ENCODE measurements at regions of chr14 and their contacts with region 1.

Region 1: GRCh38 chr14:59189786-59190771 is 1.6 kb downstream of the DAAM1 start:
- DNase-seq: peak; percentile 34 to 76 (median 49)
- ATAC-seq: peak; percentile 4
- H3K4me3 ChIP-seq: peak overlapping the region; percentile 93
- H3K4me3 Mint-ChIP-seq: peak overlapping the region; percentile 92 to 100 (median 96)
- H3K27ac ChIP-seq: peak overlapping the region; percentile 91
- H3K27ac Mint-ChIP-seq: peak overlapping the region; percentile 85 to 98 (median 93)
- H3K4me1 ChIP-seq: peaks cover 0 to 10% of the 10 kb centered on the region in 2 donors
- H3K4me1 Mint-ChIP-seq: peaks cover 15 to 30% (median 21%) of the 10 kb centered on the region in 7 donors
- H3K27me3 ChIP-seq: no peaks in the 10 kb centered on the region
- H3K27me3 Mint-ChIP-seq: peaks cover 0 to 22% (median 4%) of the 10 kb centered on the region in 5 donors

Region 2: DNA sequence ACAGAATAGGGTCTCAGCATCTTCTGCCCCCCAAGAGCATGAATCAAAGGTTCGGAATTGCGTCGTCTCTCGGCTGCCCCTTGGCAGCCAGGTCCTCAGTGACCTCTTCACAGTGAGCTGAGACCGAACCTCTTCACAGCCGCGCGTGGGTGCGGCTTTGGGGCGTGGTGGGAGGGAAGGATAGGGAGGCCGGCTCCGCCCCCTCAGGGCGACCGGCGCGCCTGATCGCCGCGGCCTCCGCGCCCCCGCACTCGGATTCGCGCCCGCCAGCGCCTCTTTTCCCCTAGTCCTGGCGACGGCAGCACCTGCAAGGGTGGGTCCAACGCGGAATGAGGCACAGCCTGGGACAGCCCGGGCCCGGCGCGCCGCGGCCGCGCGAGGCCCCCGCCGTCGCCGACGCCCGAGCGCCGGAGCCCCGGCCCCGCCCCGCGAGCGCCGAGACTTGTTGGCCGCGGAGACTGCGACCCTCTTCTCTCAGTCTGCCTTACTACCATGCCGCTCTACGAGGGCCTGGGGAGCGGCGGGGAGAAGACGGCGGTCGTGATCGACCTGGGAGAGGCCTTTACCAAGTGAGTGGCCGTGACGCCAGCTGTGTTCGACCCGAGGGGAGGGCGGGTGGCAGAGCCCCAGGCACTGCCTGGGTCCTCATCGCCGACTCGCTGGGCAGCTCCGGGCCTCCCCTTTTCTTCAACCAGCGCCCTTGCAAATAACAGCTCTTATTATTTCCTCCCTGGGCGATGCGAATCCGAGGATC is 990.2 kb before region 1 on chr14 and contains the start of gene ACTR10:
- CTCF ChIA-PET with region 1: no interaction called
- POLR2A ChIA-PET with region 1: no interaction called
- intact Hi-C with region 1: loop called (anchors 1 kb)
- DNase-seq: peak; percentile 80 to 93 (median 88)
- ATAC-seq: peak; percentile 94
- H3K4me3 ChIP-seq: peak within 1 kb of the TSS; percentile 75
- H3K4me3 Mint-ChIP-seq: peak within 1 kb of the TSS; percentile 90 to 99 (median 97)
- H3K27ac ChIP-seq: peak within 1 kb of the TSS; percentile 87
- H3K27ac Mint-ChIP-seq: peak within 1 kb of the TSS; percentile 93 to 99 (median 98)
- H3K4me1 ChIP-seq: peaks cover 15 to 27% of the 10 kb centered on the region in 2 donors
- H3K4me1 Mint-ChIP-seq: peaks cover 21 to 60% (median 48%) of the 10 kb centered on the region in 7 donors
- H3K27me3 ChIP-seq: no peaks in the 10 kb centered on the region
- H3K27me3 Mint-ChIP-seq: peaks cover 0 to 7% (median 0%) of the 10 kb centered on the region in 5 donors
- total RNA-seq, gene ACTR10: 40.0 to 54.6 (median 50.4) TPM

Region 3: GRCh38 chr14:58331111-58331510 is 859.0 kb before region 1 on chr14:
- CTCF ChIA-PET with region 1: no interaction called
- POLR2A ChIA-PET with region 1: no interaction called
- intact Hi-C with region 1: loop called in 1 of 2 experiments (anchors 2 kb)
- DNase-seq: peak; percentile 61 to 98 (median 95)
- ATAC-seq: peak; percentile 97
- H3K4me3 ChIP-seq: peak overlapping the region; percentile 17
- H3K4me3 Mint-ChIP-seq: peak overlapping the region; percentile 38 to 85 (median 76)
- H3K27ac ChIP-seq: peak overlapping the region; percentile 72
- H3K27ac Mint-ChIP-seq: peak overlapping the region; percentile 84 to 97 (median 94)
- H3K4me1 ChIP-seq: peaks cover 5 to 9% of the 10 kb centered on the region in 2 donors
- H3K4me1 Mint-ChIP-seq: peaks cover 17 to 42% (median 32%) of the 10 kb centered on the region in 7 donors
- H3K27me3 ChIP-seq: no peaks in the 10 kb centered on the region
- H3K27me3 Mint-ChIP-seq: no peaks in the 10 kb centered on the region

Region 4: DNA sequence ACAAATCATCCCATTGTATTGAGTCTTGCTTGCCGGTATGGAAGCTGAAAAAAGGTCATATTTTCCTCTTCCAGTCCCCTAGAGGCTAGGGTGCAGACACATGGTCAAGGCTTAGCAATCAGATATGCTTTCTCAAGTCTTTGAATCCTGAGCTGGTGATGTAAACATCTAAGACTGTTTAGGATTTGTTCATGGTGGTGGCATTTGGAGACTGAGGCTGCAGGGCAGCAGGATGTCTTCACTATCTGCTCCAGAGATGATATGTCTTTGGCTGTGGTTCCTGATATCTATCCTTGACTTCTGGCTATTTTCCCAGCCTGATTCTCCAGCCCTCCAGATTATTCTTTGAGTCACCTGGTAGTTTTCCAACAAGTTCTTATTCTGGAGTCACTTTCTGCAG is 602.8 kb before region 1 on chr14:
- CTCF ChIA-PET with region 1: no interaction called
- POLR2A ChIA-PET with region 1: no interaction called
- intact Hi-C with region 1: no loop called
- DNase-seq: no peak
- ATAC-seq: no peak
- H3K4me3 ChIP-seq: no peak overlapping the region
- H3K4me3 Mint-ChIP-seq: no peak overlapping the region
- H3K27ac ChIP-seq: no peak overlapping the region
- H3K27ac Mint-ChIP-seq: no peak overlapping the region
- H3K4me1 ChIP-seq: no peaks in the 10 kb centered on the region
- H3K4me1 Mint-ChIP-seq: peaks cover 0 to 11% (median 6%) of the 10 kb centered on the region in 7 donors
- H3K27me3 ChIP-seq: no peaks in the 10 kb centered on the region
- H3K27me3 Mint-ChIP-seq: peaks cover 0 to 12% (median 7%) of the 10 kb centered on the region in 5 donors

Region 5: DNA sequence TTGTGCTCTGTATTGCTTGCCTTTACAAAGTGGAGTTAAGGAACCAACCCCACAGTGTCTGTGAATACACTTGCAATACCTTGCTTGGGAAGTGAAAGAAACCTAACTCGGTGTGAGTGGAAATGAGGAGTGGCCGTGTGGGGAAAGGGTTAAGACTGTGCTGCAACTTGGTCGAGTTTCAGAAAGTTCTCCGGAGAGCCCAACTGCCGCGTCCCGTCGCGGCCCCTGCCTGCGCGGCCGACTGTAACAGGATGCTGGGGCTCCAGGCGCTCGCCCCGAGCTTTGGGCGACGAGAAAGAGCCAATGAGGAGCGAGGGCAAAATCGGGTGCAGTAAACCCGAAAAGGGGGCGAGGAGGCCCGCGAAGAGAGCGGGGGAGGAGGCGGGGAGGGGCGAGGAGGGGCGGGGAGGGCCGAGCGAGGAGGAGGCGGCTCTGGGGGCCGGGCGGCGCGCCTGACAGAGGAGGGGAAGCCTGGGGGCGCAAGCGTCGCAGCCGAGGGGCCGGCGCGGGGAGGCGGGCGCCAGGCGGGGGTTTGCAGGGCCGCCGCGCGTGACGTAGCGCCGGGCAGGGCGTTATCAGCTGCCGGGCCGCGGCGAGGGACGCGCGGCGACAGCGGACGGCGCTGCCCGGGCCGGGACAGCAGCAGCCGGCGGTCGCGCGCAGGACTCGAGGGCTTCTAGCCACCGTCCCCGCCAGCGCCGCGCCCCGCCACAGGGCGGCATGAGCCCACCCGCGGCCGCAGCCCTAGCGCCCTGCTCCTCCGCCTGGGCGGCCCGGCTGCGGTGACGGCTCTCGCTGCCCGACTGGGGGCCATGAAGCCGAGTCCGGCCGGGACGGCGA is 552.5 kb before region 1 on chr14 and contains the start of gene DACT1:
- CTCF ChIA-PET with region 1: no interaction called
- POLR2A ChIA-PET with region 1: no interaction called
- intact Hi-C with region 1: loop called (anchors 1 to 10 kb)
- DNase-seq: peak; percentile 45 to 74 (median 64)
- ATAC-seq: peak; percentile 80
- H3K4me3 ChIP-seq: peak within 1 kb of the TSS; percentile 80
- H3K4me3 Mint-ChIP-seq: peak within 1 kb of the TSS; percentile 89 to 99 (median 98)
- H3K27ac ChIP-seq: peak within 1 kb of the TSS; percentile 61
- H3K27ac Mint-ChIP-seq: peak within 1 kb of the TSS; percentile 84 to 95 (median 91)
- H3K4me1 ChIP-seq: peaks cover 0 to 22% of the 10 kb centered on the region in 2 donors
- H3K4me1 Mint-ChIP-seq: peaks cover 20 to 61% (median 45%) of the 10 kb centered on the region in 7 donors
- H3K27me3 ChIP-seq: no peaks in the 10 kb centered on the region
- H3K27me3 Mint-ChIP-seq: peaks cover 0 to 44% (median 6%) of the 10 kb centered on the region in 5 donors
- total RNA-seq, gene DACT1: 8.2 to 32.3 (median 15.0) TPM

Region 6: DNA sequence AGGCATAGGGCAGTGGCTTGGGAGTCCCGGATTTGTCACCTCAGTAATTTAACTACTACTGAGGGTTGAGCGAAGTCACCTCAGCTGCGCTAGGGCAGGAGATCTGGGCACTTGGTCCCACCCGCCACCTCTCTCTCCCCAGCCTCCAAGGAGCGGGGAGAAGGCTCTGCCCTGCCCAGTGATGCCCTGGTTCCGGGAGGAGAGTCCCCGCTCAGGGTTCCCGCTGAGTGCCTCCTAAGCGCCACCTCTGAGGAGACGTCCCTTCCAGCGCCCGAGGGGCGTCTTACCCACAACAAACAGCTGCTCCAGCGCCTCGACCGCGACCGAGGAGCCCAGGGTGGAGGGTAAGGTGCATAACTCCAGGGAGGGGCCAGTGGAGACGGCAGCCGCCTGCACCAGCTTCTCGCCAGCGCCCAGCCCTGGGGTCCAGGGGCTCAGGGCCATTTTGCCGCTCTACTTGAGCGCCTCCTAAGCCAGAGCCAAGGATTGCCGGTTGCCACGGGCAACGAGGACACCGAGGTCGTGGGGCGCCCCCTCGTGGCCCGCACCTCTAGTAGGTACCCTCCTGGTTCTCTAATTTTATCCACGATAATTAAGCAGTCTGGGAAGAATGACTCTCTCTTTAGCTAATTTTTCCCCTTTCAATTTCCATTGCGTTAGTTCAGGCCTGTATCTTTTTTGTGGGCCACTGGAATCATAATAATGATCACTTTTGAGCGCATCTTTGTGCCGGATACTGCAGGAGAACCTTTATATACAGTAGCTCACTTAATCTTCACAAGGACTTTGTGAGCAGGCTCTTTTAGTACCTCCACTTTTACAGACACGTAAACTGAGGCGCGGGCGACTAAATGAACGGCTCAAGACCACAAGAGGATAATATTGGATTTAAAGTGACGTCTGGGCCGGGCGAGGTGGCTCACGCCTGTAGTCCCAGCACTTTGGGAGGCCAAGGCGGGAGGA is 386.5 kb after region 1 on chr14 and contains the start of gene CCDC175:
- CTCF ChIA-PET with region 1: no interaction called
- POLR2A ChIA-PET with region 1: no interaction called
- intact Hi-C with region 1: loop called in 1 of 2 experiments (anchors 1 kb)
- DNase-seq: peak; percentile 66 to 84 (median 78)
- ATAC-seq: peak; percentile 98
- H3K4me3 ChIP-seq: peak within 1 kb of the TSS; percentile 63
- H3K4me3 Mint-ChIP-seq: peak within 1 kb of the TSS; percentile 66 to 86 (median 78)
- H3K27ac ChIP-seq: no peak within 1 kb of the TSS
- H3K27ac Mint-ChIP-seq: peak within 1 kb of the TSS in 3 of 9 donors; percentile 8 to 26 (median 14)
- H3K4me1 ChIP-seq: peaks cover 3 to 4% of the 10 kb centered on the region in 2 donors
- H3K4me1 Mint-ChIP-seq: peaks cover 4 to 9% (median 7%) of the 10 kb centered on the region in 7 donors
- H3K27me3 ChIP-seq: no peaks in the 10 kb centered on the region
- H3K27me3 Mint-ChIP-seq: peaks cover 20 to 46% (median 29%) of the 10 kb centered on the region in 5 donors
- total RNA-seq, gene CCDC175: not detected

Region 7: DNA sequence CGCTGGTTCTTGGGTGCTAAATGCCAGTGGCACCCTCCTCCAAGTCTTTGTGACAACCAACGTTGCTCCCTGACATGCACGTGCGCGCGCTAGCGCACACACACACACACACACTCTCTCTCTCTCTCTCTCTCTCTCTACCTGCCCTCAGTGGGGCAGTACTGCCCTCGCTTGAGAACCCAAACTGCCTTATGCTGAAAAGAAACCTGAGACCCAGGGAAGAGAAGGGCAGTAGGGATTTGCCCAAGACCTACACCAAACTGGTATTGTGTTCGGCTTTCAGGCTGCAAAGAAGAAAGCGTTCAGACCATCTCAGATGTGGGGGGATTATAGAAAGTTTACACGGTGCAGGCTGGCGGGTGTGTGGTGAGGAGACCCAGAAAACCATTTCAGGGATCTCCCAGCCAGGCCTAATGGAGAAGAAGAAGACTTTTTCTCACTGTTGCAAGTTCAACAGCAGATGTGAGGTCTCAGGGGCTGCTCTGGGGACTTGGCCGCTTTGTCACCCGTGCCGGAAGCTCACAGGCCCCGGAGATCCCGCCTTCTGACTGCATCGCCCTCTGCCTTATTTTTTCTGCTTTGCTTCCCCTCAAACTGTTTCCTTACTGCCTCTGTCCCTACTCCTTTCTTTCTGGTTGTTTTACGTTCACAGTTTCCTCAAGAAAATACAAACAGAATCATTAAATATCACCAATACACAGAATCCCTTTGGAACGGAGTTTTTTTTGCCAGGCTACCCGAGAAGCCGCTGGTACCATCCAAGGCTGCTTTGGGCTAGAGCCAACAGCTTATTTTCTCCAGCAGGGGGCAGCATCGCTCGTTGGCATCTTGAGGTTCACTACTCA is 1141.3 kb after region 1 on chr14:
- CTCF ChIA-PET with region 1: no interaction called
- POLR2A ChIA-PET with region 1: no interaction called
- intact Hi-C with region 1: loop called (anchors 2 to 10 kb)
- DNase-seq: peak; percentile 53 to 80 (median 74)
- ATAC-seq: peak; percentile 79
- H3K4me3 ChIP-seq: peak overlapping the region; percentile 55
- H3K4me3 Mint-ChIP-seq: peak overlapping the region; percentile 87 to 98 (median 96)
- H3K27ac ChIP-seq: peak overlapping the region; percentile 55
- H3K27ac Mint-ChIP-seq: peak overlapping the region; percentile 87 to 98 (median 92)
- H3K4me1 ChIP-seq: peaks cover 4 to 13% of the 10 kb centered on the region in 2 donors
- H3K4me1 Mint-ChIP-seq: peaks cover 12 to 46% (median 29%) of the 10 kb centered on the region in 7 donors
- H3K27me3 ChIP-seq: no peaks in the 10 kb centered on the region
- H3K27me3 Mint-ChIP-seq: peaks cover 15 to 44% (median 38%) of the 10 kb centered on the region in 5 donors